HEK293 (cell line): ENCODE measurements at regions of chr19 and their contacts with region 1.

Region 1: DNA sequence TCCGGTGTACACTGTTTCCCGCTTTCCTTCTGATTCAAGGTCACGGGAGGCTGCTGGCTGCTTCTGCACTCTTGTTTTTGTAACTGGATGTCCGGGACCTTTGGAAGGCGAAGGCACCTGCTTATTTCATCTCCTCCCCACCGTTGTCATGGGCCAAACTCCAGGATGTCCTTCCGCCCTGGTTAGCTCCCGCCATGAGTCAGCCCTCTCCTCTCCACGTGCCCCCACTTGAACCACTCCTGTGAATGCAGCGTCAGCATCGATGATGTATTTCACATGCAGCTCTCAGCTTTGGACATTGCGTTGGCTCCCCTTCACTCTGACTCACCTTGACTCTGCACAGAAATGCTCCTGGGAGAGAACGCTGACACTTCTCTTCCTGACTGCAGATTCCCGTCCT is 5.5 kb upstream of the GALP start:
- H3K4me3 ChIP-seq: no peak overlapping the region
- H3K27ac ChIP-seq: no peak overlapping the region
- H3K4me1 ChIP-seq: no peaks in the 10 kb centered on the region
- CTCF ChIP-seq: no peak

Region 2: GRCh38 chr19:55930996-55931515 is 239.2 kb before region 1 on chr19:
- CTCF ChIA-PET with region 1: no interaction called
- POLR2A ChIA-PET with region 1: no interaction called
- H3K4me3 ChIP-seq: no peak overlapping the region
- H3K27ac ChIP-seq: no peak overlapping the region
- H3K4me1 ChIP-seq: no peaks in the 10 kb centered on the region
- CTCF ChIP-seq: no peak

Region 3: GRCh38 chr19:56155124-56155687 is 15.1 kb before region 1 on chr19:
- CTCF ChIA-PET with region 1: interaction called, 11 read pairs
- POLR2A ChIA-PET with region 1: no interaction called
- H3K4me3 ChIP-seq: no peak overlapping the region
- H3K27ac ChIP-seq: no peak overlapping the region
- H3K4me1 ChIP-seq: no peaks in the 10 kb centered on the region
- CTCF ChIP-seq: no peak